ENCODE measurements at regions of chr16 and their contacts with region 1.

Region 1: DNA sequence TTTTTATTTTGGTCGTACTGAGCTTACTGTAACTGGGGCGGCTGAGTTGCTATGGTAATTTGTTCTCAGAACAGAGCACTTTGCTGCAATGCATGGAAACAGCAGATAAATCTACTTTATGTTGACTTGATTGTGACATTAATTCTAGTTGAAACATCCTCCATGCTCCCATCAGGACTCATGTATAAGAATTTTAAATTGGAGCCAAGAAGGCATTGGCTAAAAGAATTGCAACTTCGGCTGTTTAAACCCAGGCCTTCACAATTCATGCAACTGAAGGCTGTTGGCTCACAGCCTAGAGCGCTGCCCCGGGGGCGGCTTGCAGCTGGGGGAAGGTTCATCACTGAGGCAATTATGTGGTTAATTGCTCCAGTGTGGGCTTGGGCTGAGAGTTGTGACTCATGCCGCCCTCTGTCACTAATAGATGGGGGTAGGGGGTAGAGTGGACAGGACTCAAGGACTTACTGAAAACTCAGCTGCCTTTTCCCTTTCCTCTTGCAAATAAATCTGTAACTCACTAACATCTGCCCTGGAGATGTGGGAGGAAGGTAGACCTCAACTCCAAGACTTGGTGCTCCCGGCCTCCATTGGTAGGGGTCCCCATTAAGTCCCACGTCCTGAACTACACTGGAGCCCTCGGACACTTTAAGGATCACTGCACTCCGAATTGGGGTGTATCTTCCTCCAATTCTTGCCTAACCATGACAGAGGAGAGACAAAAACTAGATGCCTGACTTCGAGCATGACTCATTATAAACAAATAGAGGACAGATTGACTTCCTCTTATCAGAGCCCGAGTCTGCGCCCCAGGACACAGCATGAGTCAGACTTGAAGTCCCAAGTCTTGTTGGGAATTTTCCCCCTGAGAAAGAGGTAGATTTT is 37.5 kb downstream of the ERCC4 start:
- DNase-seq: no peak
- H3K4me3 ChIP-seq: peak overlapping the region; percentile 28 to 50 (median 44)
- H3K27ac ChIP-seq: peak overlapping the region; percentile 46 to 77 (median 70)
- H3K4me1 ChIP-seq: peaks cover 9 to 20% (median 18%) of the 10 kb centered on the region in 4 donors
- H3K27me3 ChIP-seq: no peaks in the 10 kb centered on the region
- CTCF ChIP-seq: no peak
- EP300 ChIP-seq: no peak
- POLR2A ChIP-seq: no peak

Region 2: GRCh38 chr16:14013571-14014282 is 56.3 kb after region 1 on chr16:
- intact Hi-C with region 1: loop called (anchors 10 kb)
- DNase-seq: no peak
- H3K4me3 ChIP-seq: peak overlapping the region; percentile 0 to 28 (median 6)
- H3K27ac ChIP-seq: peak overlapping the region; percentile 52 to 72 (median 63)
- H3K4me1 ChIP-seq: peaks cover 26 to 44% (median 41%) of the 10 kb centered on the region in 4 donors
- H3K27me3 ChIP-seq: no peaks in the 10 kb centered on the region
- CTCF ChIP-seq: no peak
- EP300 ChIP-seq: no peak
- POLR2A ChIP-seq: no peak